BJ (cell line): ENCODE measurements at regions of chr11 and their contacts with region 1.

Region 1: GRCh38 chr11:69245491-69246345 is 48.2 kb upstream of the MYEOV start:
- DNase-seq: no peak
- H3K4me3 ChIP-seq: no peak overlapping the region
- H3K27me3 ChIP-seq: peaks cover 6% of the 10 kb centered on the region
- CTCF ChIP-seq: no peak

Region 2: GRCh38 chr11:69088676-69089146 is 157.0 kb before region 1 on chr11:
- CTCF ChIA-PET with region 1: no interaction called
- POLR2A ChIA-PET with region 1: interaction called, 11 read pairs
- DNase-seq: peak; percentile 23
- H3K4me3 ChIP-seq: no peak overlapping the region
- H3K27me3 ChIP-seq: no peaks in the 10 kb centered on the region
- CTCF ChIP-seq: peak; percentile 80